Posterior vena cava (tissue), 2 donors: ENCODE measurements at regions of chr12 and their contacts with region 1.

Region 1: GRCh38 chr12:62799126-62799736 is 135.7 kb downstream of the PPM1H start:
- DNase-seq: no peak

Region 2: GRCh38 chr12:62435303-62436163 is 363.7 kb before region 1 on chr12:
- intact Hi-C with region 1: loop called (anchors 10 kb)
- DNase-seq: peak; percentile 85

Region 3: DNA sequence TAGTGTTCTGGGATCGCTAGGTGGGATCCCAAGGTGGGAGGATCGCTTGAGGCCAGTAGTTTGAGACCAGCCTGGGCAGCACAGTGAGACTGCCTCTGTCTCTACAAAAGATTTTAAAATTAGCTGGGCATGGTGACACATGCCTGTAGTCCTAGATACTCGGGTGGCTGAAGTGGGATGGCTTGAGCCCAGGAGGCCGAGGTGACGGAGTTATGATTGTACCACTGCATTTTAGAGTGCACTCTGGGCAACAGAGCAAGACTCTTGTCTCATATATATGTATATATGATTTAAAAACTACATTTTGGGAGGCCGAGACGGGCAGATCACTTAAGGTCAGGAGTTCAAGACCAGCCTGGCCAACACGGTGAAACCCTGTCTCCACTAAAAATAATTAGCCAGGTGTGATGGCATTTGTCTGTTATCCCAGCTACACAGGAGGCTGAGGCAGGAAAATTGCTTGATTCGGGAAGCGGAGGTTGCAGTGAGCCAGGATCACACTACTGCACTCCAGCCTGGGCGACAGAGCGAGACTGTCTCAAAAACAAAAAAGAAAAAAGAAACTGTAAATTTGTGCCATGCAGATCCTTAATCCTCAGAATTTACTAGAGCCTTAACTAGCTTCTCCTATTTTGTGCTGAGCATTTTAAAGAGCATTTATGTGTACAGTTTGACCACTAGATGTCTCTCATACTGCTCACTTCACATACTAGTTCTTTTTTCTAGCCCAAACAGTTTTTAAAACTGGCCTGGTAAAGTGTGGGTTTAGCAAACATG is 217.8 kb before region 1 on chr12:
- intact Hi-C with region 1: loop called (anchors 2 to 5 kb)
- DNase-seq: no peak

Region 4: DNA sequence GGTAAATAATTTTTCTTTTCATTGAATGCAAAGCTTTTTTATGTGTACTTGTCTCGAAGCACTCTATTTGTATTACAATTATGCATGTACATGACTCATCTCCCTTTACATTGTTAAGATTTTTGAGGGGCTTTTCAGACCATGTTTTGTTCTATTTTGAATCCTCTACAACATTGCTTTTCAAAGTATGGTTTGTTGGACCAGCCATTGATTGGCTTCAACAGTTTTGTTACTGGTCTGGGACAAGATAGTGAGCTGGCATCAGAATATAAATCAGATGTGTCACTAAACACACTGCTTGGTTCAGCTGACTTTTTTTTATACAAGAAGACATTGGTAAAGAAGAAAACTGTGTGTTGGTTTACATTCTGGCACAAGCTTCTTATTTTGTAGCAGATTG is 210.3 kb before region 1 on chr12:
- intact Hi-C with region 1: loop called in 1 of 2 experiments (anchors 5 kb)
- DNase-seq: no peak